GM13976 (cell line): ENCODE measurements at regions of chr14 and their contacts with region 1.

Region 1: GRCh38 chr14:76050797-76051392 is 65.3 kb downstream of the IFT43 start:
- DNase-seq: peak; percentile 55
- CTCF ChIP-seq: peak; percentile 76

Region 2: DNA sequence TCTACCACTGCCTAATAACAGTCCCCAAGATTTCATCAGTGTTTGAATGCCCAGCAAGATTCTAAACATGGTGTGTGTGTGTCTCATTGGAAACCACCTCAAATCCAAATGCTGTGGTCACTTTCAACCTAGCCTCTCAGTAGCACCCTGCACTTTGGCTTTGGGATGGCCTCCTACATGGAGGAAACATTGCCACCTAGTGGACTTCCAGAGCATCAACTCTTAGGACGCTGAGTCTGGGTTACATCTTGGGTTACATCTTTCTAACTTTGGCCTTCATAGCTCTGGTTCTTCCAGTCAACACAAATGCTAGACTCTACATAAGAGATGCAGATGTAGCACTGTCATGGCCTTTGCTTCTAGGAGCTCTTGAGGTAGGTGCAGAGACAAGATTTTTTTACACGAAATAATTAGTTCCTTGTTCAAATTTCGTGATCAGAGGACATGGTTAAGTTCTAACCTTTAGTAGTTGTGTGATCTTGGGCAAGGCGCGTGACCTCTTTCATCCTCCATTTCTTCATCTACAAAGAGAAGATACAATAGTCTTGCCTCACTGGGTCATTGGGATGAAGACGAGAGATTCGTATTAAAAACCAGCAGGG is 596.9 kb after region 1 on chr14:
- in situ Hi-C with region 1: loop called (anchors 25 kb)
- DNase-seq: peak; percentile 69
- CTCF ChIP-seq: peak; percentile 83